CD4-positive, alpha-beta T cell (primary cell): ENCODE measurements at regions of chr19 and their contacts with region 1.

Region 1: DNA sequence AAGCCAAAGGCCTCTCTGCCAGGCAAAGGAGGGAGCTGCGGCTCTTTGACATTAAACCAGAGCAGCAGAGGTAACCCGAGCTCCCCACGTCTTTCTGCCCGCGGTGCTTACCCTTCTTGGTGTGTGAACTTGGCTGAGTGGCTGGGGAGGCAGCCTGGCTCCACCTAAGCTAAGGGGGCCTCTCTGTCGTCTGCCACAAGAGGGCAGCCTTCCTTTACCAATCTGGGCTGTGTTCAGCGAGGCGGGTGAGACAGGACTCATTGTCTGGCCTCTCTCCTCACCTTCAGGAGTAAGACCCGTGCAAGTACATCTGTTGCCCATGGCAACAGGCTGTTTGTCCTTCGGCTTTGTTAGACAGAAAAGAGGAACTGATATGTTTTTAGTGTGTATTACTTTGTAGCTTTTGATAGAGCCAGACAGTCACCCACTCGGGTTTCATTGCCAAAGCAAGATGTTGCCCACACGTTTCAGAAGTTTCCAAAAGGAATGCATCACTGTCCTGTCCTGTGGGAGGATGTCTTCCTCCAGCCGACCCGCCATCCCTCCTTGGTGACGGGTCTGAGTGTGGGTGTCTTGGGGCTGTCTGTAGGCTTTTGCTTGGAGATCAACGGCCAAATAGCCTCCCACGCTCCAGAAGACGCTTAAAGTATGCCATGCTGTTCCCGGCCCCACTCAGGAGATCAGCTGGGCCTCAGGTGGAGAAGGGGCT is 4.6 kb downstream of the POP4 start:
- DNase-seq: peak; percentile 77 to 92 (median 81)
- ATAC-seq: peak; percentile 53
- H3K4me3 ChIP-seq: no peak overlapping the region
- H3K4me3 Mint-ChIP-seq: peak overlapping the region; percentile 52
- H3K27ac ChIP-seq: no peak overlapping the region
- H3K27ac Mint-ChIP-seq: peak overlapping the region; percentile 38
- H3K4me1 ChIP-seq: peaks cover 29% of the 10 kb centered on the region
- H3K4me1 Mint-ChIP-seq: peaks cover 29% of the 10 kb centered on the region
- H3K27me3 ChIP-seq: no peaks in the 10 kb centered on the region
- H3K27me3 Mint-ChIP-seq: no peaks in the 10 kb centered on the region
- CTCF ChIP-seq: peak; percentile 79

Region 2: GRCh38 chr19:29622138-29623070 is 11.7 kb after region 1 on chr19:
- CTCF ChIA-PET with region 1: interaction called, 14 read pairs
- POLR2A ChIA-PET with region 1: interaction called, 27 read pairs
- intact Hi-C with region 1: no loop called
- DNase-seq: peak in 8 of 14 experiments; percentile 2 to 59 (median 34)
- ATAC-seq: peak; percentile 81
- H3K4me3 ChIP-seq: no peak overlapping the region
- H3K4me3 Mint-ChIP-seq: peak overlapping the region; percentile 52
- H3K27ac ChIP-seq: peak overlapping the region; percentile 26 to 38
- H3K27ac Mint-ChIP-seq: peak overlapping the region; percentile 75
- H3K4me1 ChIP-seq: peaks cover 55% of the 10 kb centered on the region
- H3K4me1 Mint-ChIP-seq: peaks cover 43% of the 10 kb centered on the region
- H3K27me3 ChIP-seq: no peaks in the 10 kb centered on the region
- H3K27me3 Mint-ChIP-seq: no peaks in the 10 kb centered on the region
- CTCF ChIP-seq: no peak

Region 3: GRCh38 chr19:29680447-29680846 is 69.7 kb after region 1 on chr19:
- CTCF ChIA-PET with region 1: interaction called, 12 read pairs
- POLR2A ChIA-PET with region 1: interaction called, 28 read pairs
- intact Hi-C with region 1: no loop called
- DNase-seq: peak; percentile 67 to 93 (median 79)
- ATAC-seq: peak; percentile 87
- H3K4me3 ChIP-seq: peak overlapping the region; percentile 22
- H3K4me3 Mint-ChIP-seq: peak overlapping the region; percentile 76
- H3K27ac ChIP-seq: peak overlapping the region; percentile 44 to 61
- H3K27ac Mint-ChIP-seq: peak overlapping the region; percentile 93
- H3K4me1 ChIP-seq: peaks cover 85% of the 10 kb centered on the region
- H3K4me1 Mint-ChIP-seq: peaks cover 76% of the 10 kb centered on the region
- H3K27me3 ChIP-seq: no peaks in the 10 kb centered on the region
- H3K27me3 Mint-ChIP-seq: no peaks in the 10 kb centered on the region
- CTCF ChIP-seq: no peak

Region 4: DNA sequence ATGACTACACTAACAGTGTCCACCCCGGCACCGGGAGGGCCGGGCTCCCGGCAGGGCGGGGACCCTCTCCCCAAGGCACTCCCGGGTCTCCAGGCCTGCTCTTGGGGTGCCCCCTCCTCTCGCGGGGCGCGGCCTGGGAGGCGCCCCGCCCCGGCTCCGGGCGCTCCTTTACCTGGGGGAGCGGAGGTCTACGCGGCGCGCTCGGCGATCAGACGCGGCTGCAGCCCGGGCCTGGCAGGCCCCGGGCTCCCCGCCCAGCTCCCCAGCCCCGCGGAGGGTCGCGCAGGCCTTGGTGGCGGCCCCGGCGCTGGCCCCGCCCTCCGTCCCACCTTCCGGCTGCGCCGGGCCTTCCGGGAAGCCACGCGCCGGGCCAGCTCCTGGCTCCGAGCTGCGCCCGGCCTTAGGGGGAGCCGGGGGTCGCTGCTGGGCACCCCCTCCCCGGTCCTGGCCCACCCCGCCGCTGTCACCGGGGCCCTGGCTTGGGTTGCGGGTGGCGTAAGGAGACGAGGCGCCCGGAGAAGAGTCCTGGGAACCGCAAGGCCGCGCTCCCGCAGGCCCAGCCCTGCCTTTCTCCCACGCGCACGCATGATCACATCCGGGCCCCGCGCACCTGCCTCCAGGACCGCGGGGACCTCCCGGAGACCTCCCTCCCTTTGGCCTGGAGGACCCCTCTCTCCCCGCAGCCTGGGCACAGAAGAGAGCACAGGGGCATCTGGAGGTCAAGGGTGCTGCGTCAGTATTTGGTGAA is 104.4 kb after region 1 on chr19 and contains the start of gene C19orf12:
- CTCF ChIA-PET with region 1: interaction called, 59 read pairs
- POLR2A ChIA-PET with region 1: interaction called, 276 read pairs
- intact Hi-C with region 1: loop called (anchors 1 kb)
- DNase-seq: peak; percentile 29 to 75 (median 48)
- ATAC-seq: peak; percentile 54
- H3K4me3 ChIP-seq: peak within 1 kb of the TSS; percentile 69
- H3K4me3 Mint-ChIP-seq: peak within 1 kb of the TSS; percentile 91
- H3K27ac ChIP-seq: peak within 1 kb of the TSS; percentile 83 to 90
- H3K27ac Mint-ChIP-seq: peak within 1 kb of the TSS; percentile 89
- H3K4me1 ChIP-seq: peaks cover 62% of the 10 kb centered on the region
- H3K4me1 Mint-ChIP-seq: peaks cover 60% of the 10 kb centered on the region
- H3K27me3 ChIP-seq: no peaks in the 10 kb centered on the region
- H3K27me3 Mint-ChIP-seq: no peaks in the 10 kb centered on the region
- CTCF ChIP-seq: no peak
- total RNA-seq, gene C19orf12: 7.7 TPM

Region 5: GRCh38 chr19:29873024-29873800 is 262.5 kb after region 1 on chr19:
- CTCF ChIA-PET with region 1: no interaction called
- POLR2A ChIA-PET with region 1: no interaction called
- intact Hi-C with region 1: loop called in 1 of 2 experiments (anchors 10 kb)
- DNase-seq: peak; percentile 41 to 84 (median 62)
- ATAC-seq: peak; percentile 83
- H3K4me3 ChIP-seq: peak overlapping the region; percentile 12
- H3K4me3 Mint-ChIP-seq: peak overlapping the region; percentile 70
- H3K27ac ChIP-seq: no peak overlapping the region
- H3K27ac Mint-ChIP-seq: no peak overlapping the region
- H3K4me1 ChIP-seq: peaks cover 17% of the 10 kb centered on the region
- H3K4me1 Mint-ChIP-seq: no peaks in the 10 kb centered on the region
- H3K27me3 ChIP-seq: peaks cover 12 to 13% of the 10 kb centered on the region in 2 experiments
- H3K27me3 Mint-ChIP-seq: peaks cover 38% of the 10 kb centered on the region
- CTCF ChIP-seq: peak; percentile 87

Region 6: GRCh38 chr19:30023330-30023729 is 412.6 kb after region 1 on chr19:
- CTCF ChIA-PET with region 1: no interaction called
- POLR2A ChIA-PET with region 1: no interaction called
- intact Hi-C with region 1: no loop called
- DNase-seq: no peak
- ATAC-seq: no peak
- H3K4me3 ChIP-seq: no peak overlapping the region
- H3K4me3 Mint-ChIP-seq: no peak overlapping the region
- H3K27ac ChIP-seq: no peak overlapping the region
- H3K27ac Mint-ChIP-seq: no peak overlapping the region
- H3K4me1 ChIP-seq: no peaks in the 10 kb centered on the region
- H3K4me1 Mint-ChIP-seq: peaks cover 16% of the 10 kb centered on the region
- H3K27me3 ChIP-seq: no peaks in the 10 kb centered on the region
- H3K27me3 Mint-ChIP-seq: no peaks in the 10 kb centered on the region
- CTCF ChIP-seq: no peak

Region 7: GRCh38 chr19:30696514-30696913 is 1085.8 kb after region 1 on chr19:
- CTCF ChIA-PET with region 1: no interaction called
- POLR2A ChIA-PET with region 1: no interaction called
- intact Hi-C with region 1: no loop called
- DNase-seq: peak in 1 of 14 experiments; percentile 9
- ATAC-seq: no peak
- H3K4me3 ChIP-seq: no peak overlapping the region
- H3K4me3 Mint-ChIP-seq: no peak overlapping the region
- H3K27ac ChIP-seq: no peak overlapping the region
- H3K27ac Mint-ChIP-seq: no peak overlapping the region
- H3K4me1 ChIP-seq: peaks cover 5% of the 10 kb centered on the region
- H3K4me1 Mint-ChIP-seq: peaks cover 13% of the 10 kb centered on the region
- H3K27me3 ChIP-seq: peaks cover 7 to 14% of the 10 kb centered on the region in 2 experiments
- H3K27me3 Mint-ChIP-seq: peaks cover 53% of the 10 kb centered on the region
- CTCF ChIP-seq: no peak